Sigmoid colon (tissue), 7 donors: ENCODE measurements at regions of chr18 and their contacts with region 1.

Region 1: DNA sequence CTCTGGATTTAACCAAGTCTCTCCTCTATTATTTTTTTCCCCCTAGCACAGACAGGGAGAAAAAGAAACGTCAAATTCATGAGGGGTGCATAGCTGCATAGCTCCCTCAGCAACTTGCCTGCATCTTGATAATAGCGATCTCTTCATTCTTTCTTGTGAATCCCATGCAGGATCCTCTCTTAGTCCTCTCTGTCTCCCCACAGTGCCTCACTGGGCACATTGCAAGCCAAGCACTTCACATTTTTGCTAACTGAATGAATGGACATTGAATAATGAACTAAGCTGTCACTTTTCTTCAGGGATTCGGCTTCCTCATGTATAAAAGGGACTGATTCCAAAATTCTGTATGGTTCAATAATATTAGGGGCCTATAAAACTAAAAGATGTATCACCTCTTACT is 2.9 kb upstream of the EPB41L3 start:
- DNase-seq: no peak
- H3K4me3 ChIP-seq: no peak overlapping the region
- H3K27ac ChIP-seq: no peak overlapping the region
- H3K4me1 ChIP-seq: peaks cover 0 to 25% (median 4%) of the 10 kb centered on the region in 4 donors
- H3K27me3 ChIP-seq: peaks cover 0 to 14% (median 0%) of the 10 kb centered on the region in 3 donors
- CTCF ChIP-seq: peak in 3 of 4 experiments; percentile 35 to 73 (median 62)
- EP300 ChIP-seq: no peak
- POLR2A ChIP-seq: no peak

Region 2: DNA sequence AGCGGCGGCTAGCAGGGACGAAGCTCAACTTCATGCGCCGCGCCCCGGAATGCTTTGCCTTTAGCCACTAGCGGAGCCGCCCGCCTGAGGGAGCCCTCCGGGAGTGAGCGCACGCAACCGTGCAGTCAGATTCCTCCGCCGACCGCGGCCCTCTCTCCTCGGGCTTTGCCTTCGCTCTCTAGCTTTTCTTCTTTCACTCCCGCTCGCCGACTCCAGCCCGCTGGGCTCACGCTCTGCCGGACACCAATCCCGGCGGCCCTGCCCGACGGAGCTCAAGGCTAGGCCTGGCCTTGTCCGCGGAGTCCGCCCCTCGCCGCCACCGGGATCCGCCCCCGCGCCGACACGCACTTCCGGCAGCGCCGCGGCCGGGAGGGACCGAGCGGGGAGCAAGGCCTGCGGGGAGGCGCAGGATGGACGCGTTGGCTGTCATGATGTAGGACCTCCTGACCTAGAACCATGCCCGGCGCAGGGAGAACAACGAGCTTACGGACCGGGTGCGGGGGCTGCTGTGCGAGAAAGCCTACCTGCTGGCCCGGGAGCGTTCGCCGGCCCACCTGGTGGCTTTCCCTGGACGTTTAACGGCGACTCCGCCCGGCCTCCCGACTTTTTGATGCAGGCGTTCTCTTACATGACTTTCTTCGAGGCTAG is 308.8 kb before region 1 on chr18:
- intact Hi-C with region 1: loop called (anchors 5 kb)
- DNase-seq: peak; percentile 94
- H3K4me3 ChIP-seq: peak overlapping the region; percentile 72 to 95 (median 80)
- H3K27ac ChIP-seq: peak overlapping the region; percentile 94 to 100 (median 98)
- H3K4me1 ChIP-seq: peaks cover 0 to 39% (median 32%) of the 10 kb centered on the region in 4 donors
- H3K27me3 ChIP-seq: no peaks in the 10 kb centered on the region
- CTCF ChIP-seq: peak in 3 of 4 experiments; percentile 26 to 40 (median 36)
- EP300 ChIP-seq: peak in 1 of 4 donors; percentile 32
- POLR2A ChIP-seq: peak; percentile 44 to 62

Region 3: DNA sequence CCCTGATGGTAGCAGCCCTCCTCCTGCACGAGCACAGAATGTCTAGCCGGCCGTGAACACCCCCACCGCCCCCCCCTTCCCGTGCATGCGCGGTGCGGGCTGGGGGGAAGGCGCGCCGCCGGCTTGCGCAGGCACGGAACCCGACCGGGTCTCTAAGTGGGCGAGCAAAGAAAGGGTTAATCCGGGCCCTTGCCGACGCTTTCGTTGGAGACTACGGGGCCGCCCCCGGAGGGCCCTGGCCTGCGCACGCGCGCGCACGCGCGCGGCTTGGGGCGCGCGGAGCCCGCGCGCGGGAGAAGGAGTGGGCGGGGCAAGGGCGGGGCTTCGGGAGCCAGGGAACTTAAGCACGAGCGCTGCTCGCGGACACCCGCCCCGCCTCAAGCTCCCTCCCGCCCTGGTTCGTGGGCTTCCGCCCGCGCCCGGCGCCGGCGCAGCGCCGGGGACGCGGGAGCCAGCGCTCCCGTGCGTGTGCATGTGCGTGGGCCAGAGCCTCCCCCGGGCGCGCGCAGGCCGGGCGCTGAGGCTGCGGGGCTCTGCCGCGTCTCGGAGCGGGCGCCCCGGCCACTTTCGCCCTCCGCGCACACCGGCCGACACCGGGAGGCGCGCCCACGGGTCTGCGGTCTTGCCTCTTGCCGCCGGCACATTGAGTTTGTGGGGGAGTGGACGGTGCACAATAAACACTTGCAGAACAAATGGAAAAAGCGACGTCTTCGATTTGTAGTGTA is 250.5 kb before region 1 on chr18:
- intact Hi-C with region 1: loop called (anchors 5 kb)
- DNase-seq: peak; percentile 98
- H3K4me3 ChIP-seq: peak overlapping the region; percentile 83 to 96 (median 88)
- H3K27ac ChIP-seq: peak overlapping the region; percentile 98 to 100 (median 100)
- H3K4me1 ChIP-seq: peaks cover 0 to 17% (median 12%) of the 10 kb centered on the region in 4 donors
- H3K27me3 ChIP-seq: no peaks in the 10 kb centered on the region
- CTCF ChIP-seq: no peak
- EP300 ChIP-seq: peak in 1 of 4 donors; percentile 19
- POLR2A ChIP-seq: no peak

Region 4: GRCh38 chr18:5424903-5425664 is 121.6 kb before region 1 on chr18:
- intact Hi-C with region 1: loop called (anchors 2 kb)
- DNase-seq: no peak
- H3K4me3 ChIP-seq: no peak overlapping the region
- H3K27ac ChIP-seq: no peak overlapping the region
- H3K4me1 ChIP-seq: no peaks in the 10 kb centered on the region
- H3K27me3 ChIP-seq: no peaks in the 10 kb centered on the region
- CTCF ChIP-seq: peak in 2 of 4 experiments; percentile 31 to 41
- EP300 ChIP-seq: no peak
- POLR2A ChIP-seq: no peak

Region 5: GRCh38 chr18:5456577-5457463 is 89.8 kb before region 1 on chr18:
- intact Hi-C with region 1: loop called (anchors 2 kb)
- DNase-seq: peak; percentile 68
- H3K4me3 ChIP-seq: peak overlapping the region in 3 of 4 donors; percentile 5 to 38 (median 31)
- H3K27ac ChIP-seq: peak overlapping the region in 3 of 4 donors; percentile 47 to 74 (median 72)
- H3K4me1 ChIP-seq: peaks cover 0 to 52% (median 9%) of the 10 kb centered on the region in 4 donors
- H3K27me3 ChIP-seq: no peaks in the 10 kb centered on the region
- CTCF ChIP-seq: peak; percentile 30 to 65 (median 50)
- EP300 ChIP-seq: no peak
- POLR2A ChIP-seq: no peak

Region 6: GRCh38 chr18:5488844-5489243 is 57.8 kb before region 1 on chr18:
- intact Hi-C with region 1: loop called (anchors 2 kb)
- DNase-seq: peak; percentile 75
- H3K4me3 ChIP-seq: peak overlapping the region in 2 of 4 donors; percentile 23 to 31
- H3K27ac ChIP-seq: peak overlapping the region in 3 of 4 donors; percentile 7 to 76 (median 40)
- H3K4me1 ChIP-seq: peaks cover 0 to 26% (median 0%) of the 10 kb centered on the region in 4 donors
- H3K27me3 ChIP-seq: no peaks in the 10 kb centered on the region
- CTCF ChIP-seq: no peak
- EP300 ChIP-seq: no peak
- POLR2A ChIP-seq: no peak

Region 7: GRCh38 chr18:5628512-5629255 is 82.0 kb after region 1 on chr18:
- intact Hi-C with region 1: loop called (anchors 5 kb)
- DNase-seq: peak; percentile 84
- H3K4me3 ChIP-seq: peak overlapping the region; percentile 51 to 67 (median 60)
- H3K27ac ChIP-seq: peak overlapping the region; percentile 69 to 79 (median 72)
- H3K4me1 ChIP-seq: peaks cover 0 to 25% (median 20%) of the 10 kb centered on the region in 4 donors
- H3K27me3 ChIP-seq: peaks cover 0 to 6% (median 0%) of the 10 kb centered on the region in 3 donors
- CTCF ChIP-seq: no peak
- EP300 ChIP-seq: no peak
- POLR2A ChIP-seq: no peak